ENCODE measurements at regions of chr17 and their contacts with region 1.

Region 1: DNA sequence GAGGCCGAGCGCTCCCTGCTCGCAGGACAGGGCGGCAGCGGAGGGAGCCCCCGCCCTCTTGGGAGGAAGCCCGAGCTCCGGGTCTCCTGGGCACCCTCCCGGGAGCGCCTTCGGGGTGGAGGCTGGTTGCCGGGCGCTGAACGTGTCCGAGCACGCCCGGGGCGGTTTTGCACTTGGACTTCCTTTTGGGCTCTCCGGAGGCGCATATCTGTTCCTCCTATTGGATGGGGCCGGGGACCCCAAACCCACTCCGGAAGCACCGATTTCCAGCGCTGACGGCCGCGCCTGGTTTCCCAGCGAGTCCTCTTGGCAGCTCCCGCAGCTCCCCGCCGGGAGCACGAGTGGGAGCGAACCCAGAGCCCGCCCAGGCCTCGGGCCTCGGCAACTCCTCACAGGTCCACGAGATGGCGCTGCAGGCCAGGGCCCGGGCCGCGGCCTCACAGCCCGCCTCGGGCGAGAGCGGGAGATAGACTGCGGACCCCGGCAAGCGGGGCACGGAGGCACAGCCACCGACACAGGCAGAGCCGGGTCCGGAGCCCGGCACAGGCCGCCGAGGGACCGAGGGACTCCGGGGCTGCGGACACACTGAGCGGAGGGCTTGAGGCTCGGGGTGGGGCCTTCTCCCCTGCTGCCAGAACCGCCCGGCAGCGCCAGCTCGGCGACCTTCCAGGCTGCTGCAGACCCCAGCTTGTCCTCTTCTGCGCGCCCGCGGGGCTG is 12.7 kb downstream of the TBX2 start:
- DNase-seq: peak; percentile 83 to 91
- H3K4me3 ChIP-seq: peak overlapping the region; percentile 65
- H3K4me3 Mint-ChIP-seq: peak overlapping the region; percentile 77
- H3K27ac Mint-ChIP-seq: peak overlapping the region; percentile 63
- H3K4me1 ChIP-seq: peaks cover 8% of the 10 kb centered on the region; the same call in 1 of the 2 replicates
- H3K4me1 Mint-ChIP-seq: no peaks in the 10 kb centered on the region
- H3K27me3 ChIP-seq: no peaks in the 10 kb centered on the region
- H3K27me3 Mint-ChIP-seq: no peaks in the 10 kb centered on the region
- CTCF ChIP-seq: peak; percentile 95 to 100

Region 2: GRCh38 chr17:60971515-60972369 is 440.6 kb before region 1 on chr17:
- CTCF ChIA-PET with region 1: interaction called, 13 read pairs
- POLR2A ChIA-PET with region 1: no interaction called
- intact Hi-C with region 1: loop called (anchors 1 kb)
- DNase-seq: peak; percentile 58 to 62
- H3K4me3 ChIP-seq: no peak overlapping the region
- H3K4me3 Mint-ChIP-seq: no peak overlapping the region
- H3K27ac Mint-ChIP-seq: no peak overlapping the region
- H3K4me1 ChIP-seq: no peaks in the 10 kb centered on the region
- H3K4me1 Mint-ChIP-seq: no peaks in the 10 kb centered on the region
- H3K27me3 ChIP-seq: no peaks in the 10 kb centered on the region
- H3K27me3 Mint-ChIP-seq: no peaks in the 10 kb centered on the region
- CTCF ChIP-seq: peak; percentile 66 to 77

Region 3: GRCh38 chr17:61399131-61400057 is 12.9 kb before region 1 on chr17 and contains the start of gene TBX2:
- CTCF ChIA-PET with region 1: interaction called, 12 read pairs
- POLR2A ChIA-PET with region 1: interaction called, 3 read pairs
- intact Hi-C with region 1: loop called (anchors 1 kb)
- DNase-seq: peak; percentile 89 to 90
- H3K4me3 ChIP-seq: peak within 1 kb of the TSS; percentile 72
- H3K4me3 Mint-ChIP-seq: peak within 1 kb of the TSS; percentile 85
- H3K27ac Mint-ChIP-seq: peak within 1 kb of the TSS; percentile 78
- H3K4me1 ChIP-seq: peaks cover 16% of the 10 kb centered on the region
- H3K4me1 Mint-ChIP-seq: peaks cover 17% of the 10 kb centered on the region
- H3K27me3 ChIP-seq: no peaks in the 10 kb centered on the region
- H3K27me3 Mint-ChIP-seq: no peaks in the 10 kb centered on the region
- CTCF ChIP-seq: no peak
- total RNA-seq, gene TBX2: 8.9 and 11.5 TPM in 2 replicates

Region 4: GRCh38 chr17:61495145-61495857 is 83.0 kb after region 1 on chr17:
- CTCF ChIA-PET with region 1: no interaction called
- POLR2A ChIA-PET with region 1: interaction called, 4 read pairs
- intact Hi-C with region 1: loop called (anchors 2 kb)
- DNase-seq: no peak
- H3K4me3 ChIP-seq: no peak overlapping the region
- H3K4me3 Mint-ChIP-seq: peak overlapping the region; percentile 38
- H3K27ac Mint-ChIP-seq: peak overlapping the region; percentile 42
- H3K4me1 ChIP-seq: peaks cover 42% of the 10 kb centered on the region
- H3K4me1 Mint-ChIP-seq: peaks cover 26% of the 10 kb centered on the region
- H3K27me3 ChIP-seq: no peaks in the 10 kb centered on the region
- H3K27me3 Mint-ChIP-seq: no peaks in the 10 kb centered on the region
- CTCF ChIP-seq: no peak

Region 5: GRCh38 chr17:61542027-61542426 is 129.7 kb after region 1 on chr17:
- CTCF ChIA-PET with region 1: no interaction called
- POLR2A ChIA-PET with region 1: no interaction called
- intact Hi-C with region 1: no loop called
- DNase-seq: no peak
- H3K4me3 ChIP-seq: no peak overlapping the region
- H3K4me3 Mint-ChIP-seq: no peak overlapping the region
- H3K27ac Mint-ChIP-seq: no peak overlapping the region
- H3K4me1 ChIP-seq: no peaks in the 10 kb centered on the region
- H3K4me1 Mint-ChIP-seq: no peaks in the 10 kb centered on the region
- H3K27me3 ChIP-seq: no peaks in the 10 kb centered on the region
- H3K27me3 Mint-ChIP-seq: no peaks in the 10 kb centered on the region
- CTCF ChIP-seq: no peak

Region 6: DNA sequence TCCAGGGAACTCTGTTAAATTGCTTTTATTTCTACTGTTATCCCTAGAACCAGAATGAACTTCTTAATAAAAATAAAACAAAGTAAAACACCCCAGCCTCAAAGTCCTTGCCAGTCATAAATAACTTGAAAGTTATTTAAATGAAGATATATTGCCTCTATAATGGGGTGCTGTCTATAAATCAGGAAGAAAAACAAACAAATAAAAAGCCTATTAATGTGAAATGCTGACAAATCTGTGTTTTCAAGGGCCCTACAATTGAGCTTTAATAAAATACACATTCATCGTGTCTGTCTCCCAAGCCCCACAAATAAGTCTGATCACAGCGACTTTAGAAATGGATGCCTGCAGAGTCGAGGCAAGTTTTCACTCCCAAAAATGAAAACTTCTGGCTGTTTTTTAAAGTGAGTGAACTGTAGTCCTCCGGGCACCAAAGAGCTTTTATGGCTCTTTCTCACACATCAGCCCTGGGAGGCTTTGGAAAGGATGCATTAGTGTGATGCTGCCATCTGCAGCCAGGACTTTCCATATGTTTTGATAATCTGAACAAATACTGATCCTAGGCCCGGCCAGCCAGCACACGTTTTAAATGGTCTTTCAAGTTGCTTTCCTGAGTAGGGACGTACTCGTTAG is 162.4 kb after region 1 on chr17:
- CTCF ChIA-PET with region 1: interaction called, 40 read pairs
- POLR2A ChIA-PET with region 1: no interaction called
- intact Hi-C with region 1: loop called (anchors 1 kb)
- DNase-seq: peak; percentile 67 to 73
- H3K4me3 ChIP-seq: no peak overlapping the region
- H3K4me3 Mint-ChIP-seq: no peak overlapping the region
- H3K27ac Mint-ChIP-seq: no peak overlapping the region
- H3K4me1 ChIP-seq: no peaks in the 10 kb centered on the region
- H3K4me1 Mint-ChIP-seq: peaks cover 7% of the 10 kb centered on the region
- H3K27me3 ChIP-seq: no peaks in the 10 kb centered on the region
- H3K27me3 Mint-ChIP-seq: no peaks in the 10 kb centered on the region
- CTCF ChIP-seq: peak; percentile 47 to 59

Region 7: DNA sequence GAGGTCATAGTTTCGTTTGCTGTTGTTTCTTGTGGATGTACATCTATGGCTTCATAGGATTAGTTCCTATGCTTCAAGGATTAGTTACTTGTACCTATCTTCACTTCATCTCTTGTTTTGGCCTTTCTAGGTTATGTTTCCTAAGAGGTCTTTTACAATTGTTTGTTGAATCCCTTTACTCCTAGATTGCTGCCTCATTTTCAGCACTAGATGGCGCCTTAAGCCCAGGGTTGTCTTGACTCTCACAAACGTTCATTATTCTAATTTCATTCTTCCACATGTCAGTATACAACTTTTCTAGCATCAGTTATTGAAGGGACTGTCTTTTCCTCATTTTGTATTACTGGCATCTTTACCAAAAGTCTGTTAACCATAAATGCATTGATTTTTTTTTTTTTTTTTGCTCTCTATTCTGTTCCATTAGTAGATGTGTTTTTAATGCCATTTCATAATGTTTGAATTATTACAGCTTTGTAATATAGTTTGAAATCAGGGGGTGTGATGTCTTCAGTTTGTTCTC is 223.7 kb after region 1 on chr17:
- CTCF ChIA-PET with region 1: no interaction called
- POLR2A ChIA-PET with region 1: no interaction called
- intact Hi-C with region 1: loop called (anchors 2 kb)
- DNase-seq: peak; percentile 55 to 67
- H3K4me3 ChIP-seq: no peak overlapping the region
- H3K4me3 Mint-ChIP-seq: no peak overlapping the region
- H3K27ac Mint-ChIP-seq: no peak overlapping the region
- H3K4me1 ChIP-seq: no peaks in the 10 kb centered on the region
- H3K4me1 Mint-ChIP-seq: no peaks in the 10 kb centered on the region
- H3K27me3 ChIP-seq: no peaks in the 10 kb centered on the region
- H3K27me3 Mint-ChIP-seq: peaks cover 29% of the 10 kb centered on the region
- CTCF ChIP-seq: peak; percentile 82 to 86